Endothelial cell of umbilical vein (primary cell): ENCODE measurements at regions of chr4 and their contacts with region 1.

Region 1: DNA sequence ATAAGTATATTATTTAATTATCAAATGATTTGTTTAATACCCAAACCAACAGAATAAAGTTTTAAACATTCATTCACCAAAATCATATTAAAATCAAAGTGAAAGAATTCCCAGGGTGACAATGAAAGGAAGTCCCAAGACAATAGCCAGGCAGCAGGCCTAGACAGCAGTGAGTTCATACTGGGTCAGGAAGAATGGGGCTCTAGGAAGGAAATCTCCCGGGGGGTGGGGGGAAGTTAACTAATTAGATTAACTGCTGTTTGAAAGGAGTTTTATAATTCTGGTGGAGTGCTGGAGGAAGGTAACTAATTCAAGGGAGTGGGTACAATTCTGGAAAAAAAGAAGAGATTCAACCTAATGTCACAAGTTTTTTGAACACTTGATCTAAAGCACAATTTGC is 104.1 kb downstream of the ZAR1 start:
- DNase-seq: peak; percentile 88
- H3K4me3 ChIP-seq: peak overlapping the region in 1 of 3 experiments; percentile 33
- H3K27ac ChIP-seq: peak overlapping the region; percentile 31
- H3K4me1 ChIP-seq: peaks cover 47% of the 10 kb centered on the region
- H3K27me3 ChIP-seq: no peaks in the 10 kb centered on the region
- CTCF ChIP-seq: no peak
- POLR2A ChIP-seq: no peak

Region 2: GRCh38 chr4:48635980-48636379 is 41.8 kb after region 1 on chr4:
- CTCF ChIA-PET with region 1: interaction called, 5 read pairs
- POLR2A ChIA-PET with region 1: no interaction called
- dilution Hi-C with region 1: no loop called
- intact Hi-C with region 1: loop called (anchors 1 kb)
- DNase-seq: peak; percentile 21
- H3K4me3 ChIP-seq: peak overlapping the region in 1 of 3 experiments; percentile 48
- H3K27ac ChIP-seq: peak overlapping the region; percentile 45
- H3K4me1 ChIP-seq: peaks cover 35% of the 10 kb centered on the region
- H3K27me3 ChIP-seq: no peaks in the 10 kb centered on the region
- CTCF ChIP-seq: no peak
- POLR2A ChIP-seq: no peak

Region 3: GRCh38 chr4:48668254-48669017 is 74.3 kb after region 1 on chr4:
- CTCF ChIA-PET with region 1: no interaction called
- POLR2A ChIA-PET with region 1: no interaction called
- dilution Hi-C with region 1: no loop called
- intact Hi-C with region 1: loop called (anchors 5 kb)
- DNase-seq: no peak
- H3K4me3 ChIP-seq: no peak overlapping the region
- H3K27ac ChIP-seq: no peak overlapping the region
- H3K4me1 ChIP-seq: peaks cover 29% of the 10 kb centered on the region
- H3K27me3 ChIP-seq: no peaks in the 10 kb centered on the region
- CTCF ChIP-seq: no peak
- POLR2A ChIP-seq: no peak

Region 4: GRCh38 chr4:48804584-48805301 is 210.6 kb after region 1 on chr4:
- CTCF ChIA-PET with region 1: no interaction called
- POLR2A ChIA-PET with region 1: no interaction called
- dilution Hi-C with region 1: no loop called
- intact Hi-C with region 1: no loop called
- DNase-seq: peak; percentile 44
- H3K4me3 ChIP-seq: no peak overlapping the region
- H3K27ac ChIP-seq: no peak overlapping the region
- H3K4me1 ChIP-seq: peaks cover 32% of the 10 kb centered on the region
- H3K27me3 ChIP-seq: peaks cover 0 to 2% of the 10 kb centered on the region in 2 experiments
- CTCF ChIP-seq: no peak
- POLR2A ChIP-seq: no peak